Motor neuron (in vitro differentiated cells): ENCODE measurements at regions of chr13 and their contacts with region 1.

Region 1: GRCh38 chr13:75258159-75258782 is 223.7 kb downstream of the TBC1D4 start:
- ATAC-seq: peak in 5 of 8 experiments; percentile 29 to 75 (median 50)
- H3K4me3 ChIP-seq: no peak overlapping the region
- H3K27ac ChIP-seq: no peak overlapping the region
- H3K4me1 ChIP-seq: peaks cover 0 to 10% of the 10 kb centered on the region in 2 donors

Region 2: DNA sequence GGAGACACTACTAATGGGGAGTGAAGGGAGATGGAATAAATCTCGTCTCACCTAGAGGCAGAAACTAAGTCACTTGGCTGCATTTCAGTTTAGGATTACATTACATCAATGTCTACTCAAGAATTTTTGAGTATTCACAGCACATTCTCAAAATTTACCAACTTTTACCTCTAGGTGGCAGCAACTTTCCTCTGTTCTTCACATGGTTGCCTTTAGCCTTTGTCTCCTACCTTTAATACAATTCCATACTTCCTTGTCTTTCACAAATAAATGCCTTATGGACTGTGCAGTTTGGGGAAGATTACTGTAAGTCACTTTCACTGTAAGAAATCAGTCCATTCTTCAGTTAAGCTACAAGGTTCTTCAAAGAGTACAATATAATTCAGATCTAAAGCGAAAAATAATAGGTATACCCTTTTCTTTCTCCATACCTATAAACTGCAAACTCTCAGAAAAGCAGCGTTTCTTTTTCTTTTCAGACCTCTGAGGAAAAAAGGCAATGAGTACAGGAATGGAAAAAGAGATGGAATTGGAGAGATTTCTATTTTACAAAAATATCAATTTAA is 1503.5 kb before region 1 on chr13:
- in situ Hi-C with region 1: loop called in 1 of 9 experiments (anchors 25 kb)
- ATAC-seq: peak; percentile 55 to 87 (median 72)
- H3K4me3 ChIP-seq: no peak overlapping the region
- H3K27ac ChIP-seq: no peak overlapping the region
- H3K4me1 ChIP-seq: peaks cover 3 to 13% of the 10 kb centered on the region in 2 donors

Region 3: DNA sequence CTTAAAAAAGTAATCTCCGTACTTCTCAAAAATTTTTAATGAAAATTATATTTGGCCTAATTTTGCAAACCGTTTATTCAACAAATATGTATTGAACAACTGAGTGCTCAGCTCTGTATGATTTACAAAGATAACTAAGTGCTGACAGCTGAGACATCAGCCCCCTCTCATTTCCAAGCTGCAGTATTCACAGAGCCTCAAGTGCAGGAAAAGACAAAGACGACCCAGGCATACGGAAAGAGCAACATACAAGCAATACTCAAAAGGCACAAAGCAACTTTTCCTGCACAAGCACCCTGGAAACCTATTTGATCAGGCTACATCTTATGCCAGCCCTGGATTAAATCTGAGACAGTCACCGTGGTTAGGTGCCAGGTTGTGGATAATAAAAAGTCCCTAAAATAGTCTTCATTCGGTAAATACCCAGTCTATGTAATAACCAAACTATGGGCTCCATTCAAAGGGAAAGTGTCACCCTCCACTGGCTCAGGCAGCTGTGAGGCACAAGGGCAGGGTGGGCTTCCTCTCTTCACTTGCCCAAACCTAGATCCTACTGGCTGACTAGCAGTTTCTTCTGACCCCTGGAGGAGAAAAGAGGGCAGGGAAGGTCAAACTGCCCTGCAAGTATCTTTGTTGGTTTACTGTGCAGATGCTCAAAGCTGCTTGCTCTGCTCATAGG is 158.2 kb after region 1 on chr13:
- in situ Hi-C with region 1: no loop called
- ATAC-seq: peak in 3 of 8 experiments; percentile 39 to 46 (median 45)
- H3K4me3 ChIP-seq: no peak overlapping the region
- H3K27ac ChIP-seq: peak overlapping the region in 1 of 2 donors; percentile 12
- H3K4me1 ChIP-seq: peaks cover 14 to 25% of the 10 kb centered on the region in 2 donors

Region 4: GRCh38 chr13:75581874-75582640 is 323.8 kb after region 1 on chr13:
- in situ Hi-C with region 1: no loop called
- ATAC-seq: peak in 2 of 8 experiments; percentile 46 to 84
- H3K4me3 ChIP-seq: no peak overlapping the region
- H3K27ac ChIP-seq: no peak overlapping the region
- H3K4me1 ChIP-seq: no peaks in the 10 kb centered on the region

Region 5: DNA sequence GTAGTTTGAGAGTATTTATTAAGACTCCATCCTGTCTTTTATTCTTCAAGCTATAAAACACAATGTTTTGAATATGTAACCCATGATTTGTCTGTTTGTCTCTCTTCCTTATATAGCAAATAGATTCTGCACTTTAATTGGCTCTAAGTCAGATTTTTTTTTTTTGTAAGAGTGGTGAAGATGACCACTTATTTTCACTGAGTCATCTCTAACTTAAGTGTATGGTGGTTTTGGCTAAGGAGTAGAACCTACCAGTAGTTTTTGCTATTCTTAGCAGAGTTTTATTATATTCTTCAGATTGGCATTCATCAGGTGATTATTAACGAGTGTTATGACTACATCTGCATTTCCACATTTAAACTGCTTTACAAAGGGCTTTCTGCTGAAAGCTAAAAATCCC is 572.6 kb after region 1 on chr13:
- in situ Hi-C with region 1: no loop called
- ATAC-seq: no peak
- H3K4me3 ChIP-seq: no peak overlapping the region
- H3K27ac ChIP-seq: no peak overlapping the region
- H3K4me1 ChIP-seq: no peaks in the 10 kb centered on the region